Naive thymus-derived CD4-positive, alpha-beta T cell (primary cell): ENCODE measurements at regions of chr1 and their contacts with region 1.

Region 1: DNA sequence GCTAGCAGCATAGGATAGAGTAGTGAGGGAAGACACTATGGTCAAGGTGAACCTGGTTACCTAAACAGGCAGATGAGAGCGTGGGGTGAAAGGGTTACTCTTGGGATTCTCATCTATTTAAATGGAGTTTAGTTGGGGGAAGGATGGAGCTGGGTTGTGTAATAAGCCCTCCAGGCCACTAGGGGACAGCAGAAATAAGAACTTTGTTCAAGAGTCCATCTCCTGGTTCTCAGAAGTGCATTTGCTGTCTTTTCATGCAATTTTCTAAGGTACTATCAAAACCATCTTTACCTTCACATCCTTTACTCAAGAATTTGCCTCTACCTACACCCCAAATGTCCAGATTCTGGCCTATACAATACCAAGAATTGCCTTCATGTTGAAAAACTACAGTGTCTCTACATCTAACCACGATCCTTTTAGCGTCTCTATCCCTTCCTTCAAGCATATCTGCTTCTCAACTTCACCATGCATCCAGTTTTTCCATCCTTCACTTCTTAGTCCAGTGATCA is 28.0 kb downstream of the SLAMF1 start:
- DNase-seq: peak in 6 of 9 donors; percentile 34 to 49 (median 46)
- ATAC-seq: peak; percentile 83
- H3K4me3 ChIP-seq: no peak overlapping the region
- H3K4me3 Mint-ChIP-seq: peak overlapping the region in 3 of 10 donors; percentile 2 to 46 (median 24)
- H3K27ac ChIP-seq: no peak overlapping the region
- H3K27ac Mint-ChIP-seq: peak overlapping the region; percentile 21 to 83 (median 69)
- H3K4me1 ChIP-seq: peaks cover 23% of the 10 kb centered on the region in 2 donors
- H3K4me1 Mint-ChIP-seq: peaks cover 32 to 84% (median 68%) of the 10 kb centered on the region in 7 donors
- H3K27me3 ChIP-seq: no peaks in the 10 kb centered on the region
- H3K27me3 Mint-ChIP-seq: no peaks in the 10 kb centered on the region

Region 2: DNA sequence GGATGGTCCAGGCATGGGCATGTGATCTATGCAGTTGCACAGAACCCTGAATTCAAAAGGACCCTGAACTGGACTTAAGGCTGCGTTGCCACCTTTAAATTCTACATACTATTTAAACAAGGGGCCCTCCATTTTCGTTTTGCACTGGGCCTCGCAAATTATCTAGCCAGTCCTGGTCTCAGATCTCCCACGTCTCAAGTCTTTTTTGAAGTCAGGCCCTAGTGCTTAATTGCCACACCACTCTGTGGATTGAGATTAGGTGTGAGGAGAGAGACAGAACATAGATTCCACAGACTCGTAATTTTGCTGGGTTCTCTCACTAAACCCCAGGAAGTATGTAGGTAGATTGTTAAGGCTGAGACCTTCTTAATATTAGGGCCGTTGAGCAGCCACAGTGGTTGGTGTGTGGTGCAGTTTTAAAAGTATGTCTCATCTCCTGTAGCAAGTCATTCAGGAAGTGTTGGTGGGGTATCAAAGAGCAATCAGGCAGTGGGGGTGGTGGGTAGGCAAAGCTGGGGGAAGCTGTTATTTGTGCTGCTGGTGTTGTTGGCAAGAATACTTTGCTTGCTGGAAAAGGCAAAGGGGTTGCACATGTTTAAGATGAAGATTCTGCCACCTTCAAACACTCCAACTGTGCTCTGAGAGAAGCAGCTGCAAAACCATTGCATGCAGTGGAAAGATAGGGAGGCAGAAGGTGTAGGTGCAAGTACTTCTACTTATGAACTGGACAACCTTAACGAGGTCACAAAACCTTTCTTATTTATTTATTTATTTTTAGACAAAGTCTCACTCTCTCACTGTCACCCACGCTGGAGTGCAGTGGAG is 50.7 kb before region 1 on chr1:
- CTCF ChIA-PET with region 1: no interaction called
- POLR2A ChIA-PET with region 1: no interaction called
- intact Hi-C with region 1: no loop called
- DNase-seq: peak in 8 of 9 donors; percentile 49 to 70 (median 59)
- ATAC-seq: peak; percentile 92
- H3K4me3 ChIP-seq: peak overlapping the region; percentile 11
- H3K4me3 Mint-ChIP-seq: peak overlapping the region; percentile 6 to 90 (median 73)
- H3K27ac ChIP-seq: peak overlapping the region; percentile 67
- H3K27ac Mint-ChIP-seq: peak overlapping the region; percentile 86 to 98 (median 89)
- H3K4me1 ChIP-seq: peaks cover 75 to 96% of the 10 kb centered on the region in 2 donors
- H3K4me1 Mint-ChIP-seq: peaks cover 63 to 95% (median 83%) of the 10 kb centered on the region in 7 donors
- H3K27me3 ChIP-seq: no peaks in the 10 kb centered on the region
- H3K27me3 Mint-ChIP-seq: no peaks in the 10 kb centered on the region

Region 3: DNA sequence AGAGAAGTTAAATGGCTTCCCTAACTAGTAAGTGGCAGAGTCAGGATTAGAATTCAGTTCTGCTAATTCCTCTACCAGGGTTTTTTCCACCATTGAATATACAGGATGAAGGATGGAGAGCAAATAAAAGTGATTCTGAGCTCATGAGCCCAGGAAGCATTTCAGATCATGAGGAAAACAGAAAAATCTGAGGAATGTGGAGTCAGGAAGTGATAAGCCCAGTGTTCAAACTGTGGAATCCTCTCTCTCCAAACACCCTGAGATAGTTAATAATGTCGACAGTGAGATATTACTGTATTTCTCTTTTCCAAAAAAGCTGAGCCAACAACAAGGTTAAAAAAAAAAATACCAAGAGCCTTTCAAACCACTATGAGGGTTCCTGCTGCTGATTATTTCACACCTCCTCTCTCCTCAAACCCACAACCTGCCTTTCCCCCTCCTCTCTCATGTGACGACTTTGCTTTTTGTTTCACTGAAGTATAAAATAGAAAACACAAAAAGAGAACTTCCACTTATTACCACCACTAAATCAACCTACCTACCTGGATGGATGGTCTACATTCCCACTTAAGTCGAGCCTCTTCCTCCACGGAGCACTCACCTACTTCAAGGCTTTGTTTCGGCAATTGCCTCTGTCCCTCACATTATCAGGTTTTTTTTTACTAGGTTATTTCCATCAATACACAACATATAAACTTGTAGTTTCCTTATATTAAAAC is 19.2 kb after region 1 on chr1:
- CTCF ChIA-PET with region 1: interaction called, 8 read pairs
- POLR2A ChIA-PET with region 1: interaction called, 11 read pairs
- intact Hi-C with region 1: loop called (anchors 1 to 2 kb)
- DNase-seq: peak in 7 of 9 donors; percentile 63 to 83 (median 74)
- ATAC-seq: peak; percentile 86
- H3K4me3 ChIP-seq: peak overlapping the region; percentile 39
- H3K4me3 Mint-ChIP-seq: peak overlapping the region; percentile 65 to 100 (median 84)
- H3K27ac ChIP-seq: peak overlapping the region; percentile 75
- H3K27ac Mint-ChIP-seq: peak overlapping the region; percentile 92 to 99 (median 95)
- H3K4me1 ChIP-seq: peaks cover 92 to 96% of the 10 kb centered on the region in 2 donors
- H3K4me1 Mint-ChIP-seq: peaks cover 64 to 100% (median 97%) of the 10 kb centered on the region in 7 donors
- H3K27me3 ChIP-seq: no peaks in the 10 kb centered on the region
- H3K27me3 Mint-ChIP-seq: no peaks in the 10 kb centered on the region

Region 4: GRCh38 chr1:160761886-160762285 is 143.1 kb after region 1 on chr1:
- CTCF ChIA-PET with region 1: no interaction called
- POLR2A ChIA-PET with region 1: no interaction called
- intact Hi-C with region 1: no loop called
- DNase-seq: no peak
- ATAC-seq: no peak
- H3K4me3 ChIP-seq: no peak overlapping the region
- H3K4me3 Mint-ChIP-seq: no peak overlapping the region
- H3K27ac ChIP-seq: no peak overlapping the region
- H3K27ac Mint-ChIP-seq: no peak overlapping the region
- H3K4me1 ChIP-seq: peaks cover 4 to 21% of the 10 kb centered on the region in 2 donors
- H3K4me1 Mint-ChIP-seq: peaks cover 5 to 14% (median 6%) of the 10 kb centered on the region in 7 donors
- H3K27me3 ChIP-seq: no peaks in the 10 kb centered on the region
- H3K27me3 Mint-ChIP-seq: no peaks in the 10 kb centered on the region

Region 5: DNA sequence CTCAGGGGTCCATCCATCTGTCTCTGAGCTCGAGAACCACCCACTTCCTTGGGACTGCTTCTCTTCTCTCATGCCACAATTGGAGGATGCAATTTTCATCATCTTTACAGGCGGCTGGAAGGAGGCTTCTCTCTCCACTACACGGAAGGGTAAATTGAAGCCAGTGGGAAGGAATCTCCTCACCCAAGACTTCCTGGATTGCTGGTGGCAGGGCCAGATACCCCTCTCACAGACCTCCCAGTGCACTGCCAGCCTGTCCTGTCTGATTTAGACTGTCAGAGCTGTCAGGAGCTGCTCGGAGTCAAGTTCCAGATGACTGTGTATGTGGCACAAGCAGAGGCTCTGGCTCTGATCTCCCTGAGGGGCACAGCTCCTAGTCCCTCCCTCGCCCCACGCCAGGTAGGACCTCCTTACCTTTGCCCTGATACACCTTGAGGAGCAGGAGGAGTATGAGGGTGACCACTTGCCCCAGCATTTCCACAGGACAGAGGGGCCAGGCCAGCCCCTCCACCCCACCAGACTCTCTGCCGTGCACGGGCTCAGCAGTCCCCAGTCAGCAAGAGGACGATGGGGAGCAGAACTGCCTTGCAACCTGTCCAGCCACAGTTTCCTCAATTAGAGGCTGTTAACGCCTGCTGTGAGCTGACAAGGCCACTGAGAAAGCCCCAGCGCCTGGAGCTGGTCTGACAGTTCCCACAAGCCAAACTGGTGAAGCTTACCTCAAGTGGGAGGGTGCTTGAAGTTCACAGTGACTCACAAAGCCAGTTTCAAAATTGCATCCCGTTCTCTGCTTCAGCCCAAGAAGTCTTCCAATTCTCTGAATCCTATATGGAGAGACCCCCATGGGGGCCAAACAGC is 243.6 kb after region 1 on chr1 and contains the start of gene CD244:
- CTCF ChIA-PET with region 1: no interaction called
- POLR2A ChIA-PET with region 1: no interaction called
- intact Hi-C with region 1: no loop called
- DNase-seq: peak in 2 of 9 donors; percentile 21 to 56
- ATAC-seq: peak; percentile 90
- H3K4me3 ChIP-seq: peak within 1 kb of the TSS; percentile 51
- H3K4me3 Mint-ChIP-seq: peak within 1 kb of the TSS in 6 of 10 donors; percentile 9 to 77 (median 14)
- H3K27ac ChIP-seq: no peak within 1 kb of the TSS
- H3K27ac Mint-ChIP-seq: peak within 1 kb of the TSS in 4 of 9 donors; percentile 26 to 52 (median 45)
- H3K4me1 ChIP-seq: peaks cover 0 to 10% of the 10 kb centered on the region in 2 donors
- H3K4me1 Mint-ChIP-seq: peaks cover 5 to 38% (median 26%) of the 10 kb centered on the region in 7 donors
- H3K27me3 ChIP-seq: no peaks in the 10 kb centered on the region
- H3K27me3 Mint-ChIP-seq: peaks cover 0 to 7% (median 0%) of the 10 kb centered on the region in 5 donors
- total RNA-seq, gene CD244: 0.27 to 33.6 (median 0.46) TPM